Activated B cell treated with CpG ODN at 0.5 μM for 24 hours (primary cell): ENCODE measurements at regions of chr3 and their contacts with region 1.

Region 1: DNA sequence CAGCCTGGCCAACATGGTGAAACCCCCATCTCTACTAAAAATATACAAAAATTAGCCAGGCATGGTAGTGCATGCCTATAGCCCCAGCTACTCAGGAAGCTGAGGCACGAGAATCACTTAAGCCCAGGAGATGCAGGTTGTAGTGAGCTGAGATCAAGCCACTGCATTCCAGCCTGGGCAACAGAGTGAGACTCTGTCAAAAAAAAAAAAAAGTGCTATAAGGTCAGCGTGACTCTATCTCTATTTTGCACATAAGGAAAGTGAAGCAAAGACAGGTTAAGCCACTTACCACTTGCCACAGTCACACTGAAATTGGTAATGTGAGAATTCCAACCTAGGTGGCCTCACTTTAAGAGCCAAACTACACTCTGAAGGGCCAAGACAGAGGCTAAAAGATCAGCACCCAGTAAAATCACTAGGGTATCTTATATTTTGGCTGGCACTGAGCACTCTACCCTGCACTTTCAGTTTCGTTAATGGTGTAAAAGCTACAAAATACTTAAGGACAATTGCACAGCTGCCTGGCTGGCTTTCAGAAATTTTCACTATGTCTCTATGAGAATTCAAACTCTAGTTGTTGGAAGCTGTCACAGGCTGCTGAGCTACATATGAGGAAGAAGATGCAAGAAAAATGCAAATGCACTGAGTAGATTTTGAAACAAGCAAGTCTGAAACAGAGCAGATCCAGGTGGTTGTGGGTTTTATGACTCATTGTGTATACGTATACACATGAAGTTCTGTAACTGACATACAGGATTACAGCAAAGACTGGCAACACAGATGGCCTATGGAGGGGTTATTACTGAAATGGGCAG is 32.7 kb downstream of the TRANK1 start:
- DNase-seq: no peak
- ATAC-seq: peak; percentile 78
- H3K4me3 Mint-ChIP-seq: peak overlapping the region; percentile 41
- H3K27ac Mint-ChIP-seq: peak overlapping the region; percentile 93
- H3K4me1 Mint-ChIP-seq: peaks cover 69% of the 10 kb centered on the region
- H3K27me3 Mint-ChIP-seq: no peaks in the 10 kb centered on the region
- CTCF ChIP-seq: no peak

Region 2: GRCh38 chr3:36876181-36876936 is 35.8 kb before region 1 on chr3:
- CTCF ChIA-PET with region 1: interaction called, 3 read pairs
- POLR2A ChIA-PET with region 1: interaction called, 12 read pairs
- intact Hi-C with region 1: loop called (anchors 1 kb)
- DNase-seq: no peak
- ATAC-seq: peak; percentile 85
- H3K4me3 Mint-ChIP-seq: peak overlapping the region; percentile 75
- H3K27ac Mint-ChIP-seq: peak overlapping the region; percentile 96
- H3K4me1 Mint-ChIP-seq: peaks cover 55% of the 10 kb centered on the region
- H3K27me3 Mint-ChIP-seq: no peaks in the 10 kb centered on the region
- CTCF ChIP-seq: no peak

Region 3: DNA sequence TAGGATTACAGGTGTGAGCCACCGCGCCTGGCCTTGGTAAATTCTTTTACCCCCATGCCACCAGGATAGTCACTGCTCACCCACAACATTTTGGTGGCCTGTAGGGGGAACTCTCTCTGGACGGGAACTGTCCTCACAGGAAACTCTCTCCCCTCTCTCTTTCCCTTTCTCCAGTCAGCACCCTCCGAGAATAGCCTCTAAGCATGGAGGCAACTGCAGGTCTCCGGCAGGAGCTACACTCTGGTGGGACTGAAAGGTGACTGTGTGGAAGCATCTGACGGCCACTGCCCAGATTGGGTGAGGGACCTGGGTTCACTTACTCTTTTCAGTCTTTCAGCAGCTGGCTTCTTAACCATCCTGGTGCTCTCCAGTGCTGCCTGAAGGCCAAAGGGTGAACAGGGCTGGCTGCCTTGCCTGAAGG is 11.3 kb after region 1 on chr3:
- CTCF ChIA-PET with region 1: interaction called, 11 read pairs
- POLR2A ChIA-PET with region 1: interaction called, 20 read pairs
- intact Hi-C with region 1: loop called (anchors 1 kb)
- DNase-seq: no peak
- ATAC-seq: no peak
- H3K4me3 Mint-ChIP-seq: peak overlapping the region; percentile 85
- H3K27ac Mint-ChIP-seq: peak overlapping the region; percentile 87
- H3K4me1 Mint-ChIP-seq: peaks cover 60% of the 10 kb centered on the region
- H3K27me3 Mint-ChIP-seq: no peaks in the 10 kb centered on the region
- CTCF ChIP-seq: no peak

Region 4: GRCh38 chr3:36937492-36937891 is 25.3 kb after region 1 on chr3:
- CTCF ChIA-PET with region 1: no interaction called
- POLR2A ChIA-PET with region 1: interaction called, 37 read pairs
- intact Hi-C with region 1: no loop called
- DNase-seq: no peak
- ATAC-seq: no peak
- H3K4me3 Mint-ChIP-seq: no peak overlapping the region
- H3K27ac Mint-ChIP-seq: no peak overlapping the region
- H3K4me1 Mint-ChIP-seq: peaks cover 12% of the 10 kb centered on the region
- H3K27me3 Mint-ChIP-seq: no peaks in the 10 kb centered on the region
- CTCF ChIP-seq: no peak

Region 5: GRCh38 chr3:36969540-36970432 is 57.6 kb after region 1 on chr3:
- CTCF ChIA-PET with region 1: no interaction called
- POLR2A ChIA-PET with region 1: interaction called, 7 read pairs
- intact Hi-C with region 1: loop called (anchors 1 kb)
- DNase-seq: peak; percentile 26
- ATAC-seq: peak; percentile 99
- H3K4me3 Mint-ChIP-seq: peak overlapping the region; percentile 39
- H3K27ac Mint-ChIP-seq: peak overlapping the region; percentile 93
- H3K4me1 Mint-ChIP-seq: peaks cover 30% of the 10 kb centered on the region
- H3K27me3 Mint-ChIP-seq: no peaks in the 10 kb centered on the region
- CTCF ChIP-seq: no peak